ENCODE measurements at regions of chr11 and their contacts with region 1.

Region 1: GRCh38 chr11:101848262-101848661 is 66.5 kb upstream of the CEP126 start:
- DNase-seq: peak; percentile 47
- H3K4me3 ChIP-seq: no peak overlapping the region
- H3K27ac ChIP-seq: no peak overlapping the region
- H3K4me1 ChIP-seq: no peaks in the 10 kb centered on the region
- CTCF ChIP-seq: peak; percentile 85

Region 2: GRCh38 chr11:101428918-101429317 is 419.3 kb before region 1 on chr11:
- CTCF ChIA-PET with region 1: no interaction called
- POLR2A ChIA-PET with region 1: no interaction called
- intact Hi-C with region 1: loop called (anchors 5 kb)
- DNase-seq: peak; percentile 48
- H3K4me3 ChIP-seq: no peak overlapping the region
- H3K27ac ChIP-seq: no peak overlapping the region
- H3K4me1 ChIP-seq: no peaks in the 10 kb centered on the region
- CTCF ChIP-seq: peak; percentile 80

Region 3: DNA sequence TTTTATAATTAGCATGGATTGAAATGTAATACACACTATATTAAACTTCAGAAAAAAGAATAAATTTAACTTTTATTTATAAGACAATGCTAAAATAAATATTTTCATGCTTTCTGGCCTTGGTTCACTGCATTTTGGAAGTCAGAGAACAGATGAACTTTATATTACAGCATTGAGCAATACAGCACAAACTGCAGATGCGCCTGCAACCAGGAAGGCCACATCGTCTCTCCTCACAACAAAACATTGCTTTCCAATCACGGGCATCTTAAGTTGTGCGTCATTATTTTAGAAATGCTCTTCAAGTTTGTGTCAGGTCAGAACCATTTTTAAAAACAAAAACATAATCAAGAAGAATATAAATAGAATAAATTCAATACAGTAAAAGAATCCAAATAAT is 22.7 kb before region 1 on chr11:
- CTCF ChIA-PET with region 1: no interaction called
- POLR2A ChIA-PET with region 1: no interaction called
- intact Hi-C with region 1: no loop called
- DNase-seq: no peak
- H3K4me3 ChIP-seq: no peak overlapping the region
- H3K27ac ChIP-seq: no peak overlapping the region
- H3K4me1 ChIP-seq: no peaks in the 10 kb centered on the region
- CTCF ChIP-seq: no peak

Region 4: DNA sequence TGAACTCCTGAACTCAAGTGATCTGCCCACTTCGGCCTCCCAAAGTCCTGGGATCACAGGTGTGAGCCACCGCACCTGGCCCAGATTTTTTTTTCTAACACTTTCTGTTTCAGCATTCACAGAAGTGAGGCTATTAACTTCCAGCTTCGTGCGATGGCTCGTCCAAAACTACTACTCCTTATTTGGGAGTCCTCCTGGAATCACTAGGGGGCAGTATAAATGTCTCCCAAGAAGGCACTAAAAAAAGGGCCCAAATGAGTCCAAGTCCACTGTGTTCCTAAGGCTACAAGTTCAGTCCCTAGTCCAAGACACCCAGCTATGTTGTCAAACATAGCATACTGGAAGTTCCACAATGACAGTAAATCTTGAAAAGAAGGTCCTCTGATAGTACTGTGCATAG is 405.8 kb after region 1 on chr11:
- CTCF ChIA-PET with region 1: no interaction called
- POLR2A ChIA-PET with region 1: no interaction called
- intact Hi-C with region 1: no loop called
- DNase-seq: peak; percentile 34
- H3K4me3 ChIP-seq: no peak overlapping the region
- H3K27ac ChIP-seq: no peak overlapping the region
- H3K4me1 ChIP-seq: no peaks in the 10 kb centered on the region
- CTCF ChIP-seq: peak; percentile 73

Measured in OCI-LY7 (cell line).